H1 (cell line): ENCODE measurements at regions of chr14 and their contacts with region 1.

Region 1: GRCh38 chr14:81170104-81170828 is 50.5 kb downstream of the GTF2A1 start:
- DNase-seq: peak; percentile 43 to 86
- H3K4me3 ChIP-seq: peak overlapping the region; percentile 49 to 85 (median 83)
- H3K27ac ChIP-seq: peak overlapping the region; percentile 85
- H3K4me1 ChIP-seq: peaks cover 0 to 5% (median 0%) of the 10 kb centered on the region in 4 experiments; a peak in 2 of 7 replicates
- H3K27me3 ChIP-seq: no peaks in the 10 kb centered on the region
- CTCF ChIP-seq: peak; percentile 51 to 83 (median 73)
- EP300 ChIP-seq: no peak
- POLR2A ChIP-seq: peak; percentile 54 to 90
- RAD21 ChIP-seq: peak; percentile 58 to 71

Region 2: GRCh38 chr14:80996049-80996901 is 174.0 kb before region 1 on chr14:
- CTCF ChIA-PET with region 1: interaction called, 50 read pairs
- POLR2A ChIA-PET with region 1: no interaction called
- DNase-seq: no peak
- H3K4me3 ChIP-seq: no peak overlapping the region
- H3K27ac ChIP-seq: no peak overlapping the region
- H3K4me1 ChIP-seq: no peaks in the 10 kb centered on the region
- H3K27me3 ChIP-seq: no peaks in the 10 kb centered on the region
- CTCF ChIP-seq: peak in 2 of 3 experiments; percentile 38 to 46; a peak in 3 of 4 replicates
- EP300 ChIP-seq: no peak
- POLR2A ChIP-seq: no peak
- RAD21 ChIP-seq: peak; percentile 34 to 35